Thyroid gland (tissue), 4 donors: ENCODE measurements at regions of chr9 and their contacts with region 1.

Region 1: DNA sequence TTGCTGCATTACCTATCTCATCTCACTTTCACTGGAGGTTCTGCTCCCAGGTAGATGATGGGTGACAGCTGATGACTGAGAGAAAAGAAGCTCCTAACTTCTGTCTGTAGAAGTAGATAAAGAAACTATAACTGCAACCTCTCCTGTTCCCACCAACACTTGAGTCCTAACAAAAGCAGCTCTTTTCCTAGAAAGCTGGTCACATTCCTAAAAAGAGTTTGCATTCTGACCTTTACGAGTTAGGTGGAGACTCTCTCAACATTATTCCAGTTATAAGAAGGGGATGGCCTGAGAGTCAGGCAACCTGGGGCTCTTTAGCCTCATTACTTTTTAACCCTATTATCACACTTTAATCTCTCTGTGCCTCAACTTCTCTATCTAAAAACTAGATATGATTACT is 8.9 kb upstream of the PCAT7 start:
- DNase-seq: no peak
- H3K4me3 ChIP-seq: no peak overlapping the region
- H3K27ac ChIP-seq: no peak overlapping the region
- H3K4me1 ChIP-seq: no peaks in the 10 kb centered on the region
- H3K27me3 ChIP-seq: no peaks in the 10 kb centered on the region
- CTCF ChIP-seq: no peak
- POLR2A ChIP-seq: no peak

Region 2: GRCh38 chr9:94619026-94619425 is 73.1 kb after region 1 on chr9:
- intact Hi-C with region 1: loop called (anchors 5 kb)
- DNase-seq: no peak
- H3K4me3 ChIP-seq: no peak overlapping the region
- H3K27ac ChIP-seq: no peak overlapping the region
- H3K4me1 ChIP-seq: no peaks in the 10 kb centered on the region
- H3K27me3 ChIP-seq: no peaks in the 10 kb centered on the region
- CTCF ChIP-seq: no peak
- POLR2A ChIP-seq: no peak